A673 (cell line): ENCODE measurements at regions of chrX and their contacts with region 1.

Region 1: GRCh38 chrX:74536152-74536831 is 78.1 kb downstream of the RLIM start:
- DNase-seq: peak; percentile 91
- H3K4me3 ChIP-seq: peak overlapping the region; percentile 47
- H3K27ac ChIP-seq: peak overlapping the region; percentile 73
- H3K4me1 ChIP-seq: peaks cover 16% of the 10 kb centered on the region
- H3K27me3 ChIP-seq: no peaks in the 10 kb centered on the region
- CTCF ChIP-seq: no peak

Region 2: DNA sequence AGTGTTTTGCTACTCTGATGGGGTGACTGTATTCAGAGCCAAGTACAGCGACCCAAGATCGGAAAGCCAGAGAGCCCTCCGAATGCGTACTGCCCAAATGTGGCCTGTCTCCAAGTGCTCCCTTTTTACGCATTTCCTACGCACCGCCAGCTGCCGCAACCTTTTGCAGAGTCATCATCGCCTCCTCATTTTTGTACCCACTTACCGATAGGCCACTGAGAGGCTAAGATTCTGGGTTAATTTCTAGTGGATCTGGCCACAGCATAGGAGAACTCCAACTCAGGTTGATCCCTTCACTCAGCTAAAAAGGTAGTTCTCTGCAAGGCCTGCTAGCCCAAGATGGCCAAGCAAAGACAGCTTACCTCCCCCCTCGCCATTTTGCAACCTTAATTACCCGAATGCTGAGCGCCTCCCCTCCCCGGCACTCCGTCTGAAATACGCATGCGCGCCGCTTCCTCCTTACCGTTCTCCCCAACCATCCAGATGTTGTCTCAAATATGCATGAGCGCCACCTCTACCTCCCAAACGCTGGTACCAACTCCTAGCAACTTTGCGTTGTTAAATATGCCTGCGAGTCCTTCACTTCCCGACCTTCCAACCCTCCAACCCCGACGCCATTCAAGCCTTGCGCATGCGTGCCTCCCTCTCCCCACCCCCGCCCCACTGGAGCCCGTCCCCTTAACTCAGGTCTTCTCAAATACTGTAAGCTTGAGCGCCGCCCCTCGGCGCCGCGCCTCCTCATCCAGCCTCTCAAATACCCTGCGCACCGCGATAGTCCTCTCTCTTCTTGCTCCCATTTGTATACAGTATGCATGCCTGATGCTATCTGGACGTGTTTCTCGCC is 244.1 kb before region 1 on chrX:
- CTCF ChIA-PET with region 1: no interaction called
- POLR2A ChIA-PET with region 1: no interaction called
- intact Hi-C with region 1: loop called (anchors 10 kb)
- DNase-seq: peak; percentile 93
- H3K4me3 ChIP-seq: peak overlapping the region; percentile 67
- H3K27ac ChIP-seq: peak overlapping the region; percentile 90
- H3K4me1 ChIP-seq: no peaks in the 10 kb centered on the region
- H3K27me3 ChIP-seq: no peaks in the 10 kb centered on the region
- CTCF ChIP-seq: peak; percentile 46; the same call in 1 of the 2 replicates

Region 3: DNA sequence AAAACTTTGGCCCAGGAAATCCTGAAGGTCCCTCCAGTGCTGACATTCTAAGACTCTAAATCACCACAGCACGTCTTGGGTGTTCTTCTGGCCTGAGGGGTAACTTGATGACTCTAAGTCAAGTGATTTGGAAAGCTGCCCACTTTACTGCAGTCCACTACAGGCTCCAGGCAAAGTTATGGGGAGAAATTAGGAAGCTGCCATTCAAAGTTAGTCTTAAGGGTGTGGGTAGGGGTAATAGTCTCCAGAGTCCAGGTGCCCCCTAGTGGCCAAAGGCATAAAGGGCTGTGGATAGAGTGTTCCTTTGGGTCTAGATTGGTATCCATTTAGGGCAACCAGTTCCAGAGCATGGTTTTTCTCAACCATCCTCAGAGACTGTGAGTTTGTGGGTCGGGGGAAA is 153.7 kb before region 1 on chrX:
- CTCF ChIA-PET with region 1: interaction called, 5 read pairs
- POLR2A ChIA-PET with region 1: no interaction called
- intact Hi-C with region 1: loop called (anchors 1 kb)
- DNase-seq: peak; percentile 79
- H3K4me3 ChIP-seq: no peak overlapping the region
- H3K27ac ChIP-seq: no peak overlapping the region
- H3K4me1 ChIP-seq: no peaks in the 10 kb centered on the region
- H3K27me3 ChIP-seq: no peaks in the 10 kb centered on the region
- CTCF ChIP-seq: peak; percentile 81

Region 4: DNA sequence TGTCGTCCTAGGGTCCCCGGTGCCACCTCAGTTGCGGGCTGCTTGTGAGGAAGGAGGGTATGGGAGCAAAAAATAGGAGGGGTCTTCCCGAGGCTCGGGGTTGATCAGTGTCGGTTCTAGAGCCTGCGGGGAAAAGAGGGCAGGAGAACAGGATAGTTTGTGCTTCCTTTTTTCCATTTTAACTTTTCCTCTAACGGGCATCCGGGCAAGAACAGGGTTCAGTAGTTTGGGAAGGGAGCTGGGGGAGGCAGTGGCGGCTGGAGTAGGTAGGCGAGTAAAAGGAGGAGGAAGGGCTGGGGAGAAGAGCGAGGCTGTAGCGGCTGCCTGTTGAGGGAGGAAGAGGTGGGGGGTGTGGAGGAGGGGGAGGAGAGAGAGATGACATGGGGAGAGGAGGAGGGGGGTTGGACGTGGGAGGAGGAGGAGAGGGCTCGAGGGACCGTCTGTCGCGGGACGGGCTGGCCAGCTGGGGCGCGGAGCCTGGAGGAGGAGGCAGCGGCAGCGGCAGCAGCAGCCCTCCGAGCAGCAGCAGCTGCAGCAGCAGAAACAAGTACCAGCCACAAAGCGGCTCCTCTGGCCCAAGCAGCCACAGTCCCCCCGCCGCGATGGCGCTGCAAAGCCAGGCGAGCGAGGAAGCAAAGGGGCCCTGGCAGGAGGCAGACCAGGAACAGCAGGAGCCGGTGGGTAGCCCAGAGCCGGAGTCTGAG is 115.1 kb before region 1 on chrX and contains the start of gene SLC16A2:
- CTCF ChIA-PET with region 1: interaction called, 3 read pairs
- POLR2A ChIA-PET with region 1: no interaction called
- intact Hi-C with region 1: loop called (anchors 5 kb)
- DNase-seq: peak; percentile 85
- H3K4me3 ChIP-seq: peak within 1 kb of the TSS; percentile 62
- H3K27ac ChIP-seq: peak within 1 kb of the TSS; percentile 81
- H3K4me1 ChIP-seq: no peaks in the 10 kb centered on the region
- H3K27me3 ChIP-seq: no peaks in the 10 kb centered on the region
- CTCF ChIP-seq: no peak
- total RNA-seq, gene SLC16A2: 17.8 and 24.7 TPM in 2 replicates